B cell (primary cell): ENCODE measurements at regions of chr6 and their contacts with region 1.

Region 1: GRCh38 chr6:154675602-154676088 is 57.6 kb upstream of the SCAF8 start:
- DNase-seq: peak; percentile 95
- ATAC-seq: peak; percentile 100
- H3K4me3 ChIP-seq: no peak overlapping the region
- H3K4me3 Mint-ChIP-seq: no peak overlapping the region
- H3K27ac ChIP-seq: no peak overlapping the region
- H3K27ac Mint-ChIP-seq: no peak overlapping the region
- H3K4me1 ChIP-seq: no peaks in the 10 kb centered on the region
- H3K4me1 Mint-ChIP-seq: no peaks in the 10 kb centered on the region
- H3K27me3 ChIP-seq: no peaks in the 10 kb centered on the region
- H3K27me3 Mint-ChIP-seq: no peaks in the 10 kb centered on the region
- CTCF ChIP-seq: peak; percentile 100

Region 2: DNA sequence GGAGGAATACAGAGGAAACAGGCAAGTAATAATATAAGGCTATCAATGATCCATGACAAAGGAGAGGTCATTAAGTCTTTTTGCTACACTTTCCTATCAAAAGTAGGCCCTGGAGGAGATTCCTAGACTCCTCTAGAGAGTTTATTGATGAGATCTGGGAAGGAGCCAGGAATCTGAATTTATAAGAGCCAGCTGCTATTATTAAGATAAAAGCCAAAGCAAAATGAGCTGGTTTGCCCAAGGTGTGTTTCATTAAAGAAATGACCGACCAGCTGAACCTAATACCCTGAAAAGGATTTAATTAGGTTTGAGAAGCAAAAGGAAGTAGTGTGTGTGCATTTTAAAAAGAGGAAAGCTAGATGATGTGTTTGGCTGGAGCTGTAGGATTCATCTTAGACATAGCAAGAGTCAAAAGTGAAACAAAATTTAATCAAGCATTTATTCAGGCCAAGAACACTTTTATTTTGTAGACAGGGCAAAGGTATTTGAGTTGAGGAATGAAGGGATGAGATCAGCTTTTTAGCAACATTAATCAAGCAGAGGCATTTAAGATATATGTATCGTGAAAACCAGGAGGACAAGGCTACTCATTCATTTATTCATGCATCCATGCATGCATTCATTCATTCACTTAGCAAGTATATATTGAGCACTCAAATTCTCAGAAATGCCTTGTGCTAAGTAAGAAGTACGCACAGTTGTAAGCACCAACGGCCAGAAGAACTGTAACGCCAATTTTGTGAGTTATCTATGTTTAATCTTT is 14.0 kb after region 1 on chr6:
- CTCF ChIA-PET with region 1: interaction called, 35 read pairs
- POLR2A ChIA-PET with region 1: no interaction called
- intact Hi-C with region 1: no loop called
- DNase-seq: no peak
- ATAC-seq: no peak
- H3K4me3 ChIP-seq: no peak overlapping the region
- H3K4me3 Mint-ChIP-seq: no peak overlapping the region
- H3K27ac ChIP-seq: no peak overlapping the region
- H3K27ac Mint-ChIP-seq: no peak overlapping the region
- H3K4me1 ChIP-seq: peaks cover 6 to 12% of the 10 kb centered on the region in 2 donors
- H3K4me1 Mint-ChIP-seq: peaks cover 19% of the 10 kb centered on the region
- H3K27me3 ChIP-seq: no peaks in the 10 kb centered on the region
- H3K27me3 Mint-ChIP-seq: no peaks in the 10 kb centered on the region
- CTCF ChIP-seq: no peak

Region 3: GRCh38 chr6:154733012-154733625 is 57.5 kb after region 1 on chr6 and contains the start of gene SCAF8:
- CTCF ChIA-PET with region 1: interaction called, 9 read pairs
- POLR2A ChIA-PET with region 1: interaction called, 3 read pairs
- intact Hi-C with region 1: loop called (anchors 1 kb)
- DNase-seq: peak; percentile 94
- ATAC-seq: peak; percentile 74
- H3K4me3 ChIP-seq: peak within 1 kb of the TSS; percentile 78 to 97 (median 91)
- H3K4me3 Mint-ChIP-seq: peak within 1 kb of the TSS; percentile 92
- H3K27ac ChIP-seq: peak within 1 kb of the TSS; percentile 96 to 97
- H3K27ac Mint-ChIP-seq: peak within 1 kb of the TSS; percentile 99
- H3K4me1 ChIP-seq: peaks cover 31% of the 10 kb centered on the region in 2 donors
- H3K4me1 Mint-ChIP-seq: peaks cover 38% of the 10 kb centered on the region
- H3K27me3 ChIP-seq: no peaks in the 10 kb centered on the region
- H3K27me3 Mint-ChIP-seq: no peaks in the 10 kb centered on the region
- CTCF ChIP-seq: peak; percentile 83
- total RNA-seq, gene SCAF8: 75.2 and 77.9 TPM in 2 replicates

Region 4: DNA sequence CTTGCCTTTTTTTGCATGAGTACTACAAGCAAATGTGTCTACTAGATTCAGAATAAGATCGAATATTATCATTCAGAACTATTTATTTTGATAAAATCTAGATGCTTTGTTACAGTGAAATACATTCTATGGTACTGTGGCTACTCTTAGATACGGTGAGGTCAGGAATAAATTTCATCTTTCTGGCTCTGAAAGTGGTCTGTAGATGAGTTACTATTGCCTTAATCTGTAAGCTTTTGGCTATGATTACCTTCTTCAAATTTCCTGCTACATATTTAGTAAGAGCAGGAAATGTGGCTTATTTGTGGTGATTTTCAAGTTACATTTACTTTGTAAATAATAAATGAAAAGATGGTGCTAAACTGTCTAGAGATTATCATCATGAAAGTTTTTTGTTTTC is 107.6 kb after region 1 on chr6:
- CTCF ChIA-PET with region 1: interaction called, 11 read pairs
- POLR2A ChIA-PET with region 1: no interaction called
- intact Hi-C with region 1: no loop called
- DNase-seq: no peak
- ATAC-seq: no peak
- H3K4me3 ChIP-seq: no peak overlapping the region
- H3K4me3 Mint-ChIP-seq: no peak overlapping the region
- H3K27ac ChIP-seq: no peak overlapping the region
- H3K27ac Mint-ChIP-seq: no peak overlapping the region
- H3K4me1 ChIP-seq: no peaks in the 10 kb centered on the region
- H3K4me1 Mint-ChIP-seq: peaks cover 5% of the 10 kb centered on the region
- H3K27me3 ChIP-seq: no peaks in the 10 kb centered on the region
- H3K27me3 Mint-ChIP-seq: no peaks in the 10 kb centered on the region
- CTCF ChIP-seq: no peak

Region 5: GRCh38 chr6:154814063-154814462 is 138.4 kb after region 1 on chr6:
- CTCF ChIA-PET with region 1: interaction called, 267 read pairs
- POLR2A ChIA-PET with region 1: no interaction called
- intact Hi-C with region 1: no loop called
- DNase-seq: peak; percentile 38
- ATAC-seq: peak; percentile 50
- H3K4me3 ChIP-seq: no peak overlapping the region
- H3K4me3 Mint-ChIP-seq: peak overlapping the region; percentile 62
- H3K27ac ChIP-seq: peak overlapping the region; percentile 28 to 49
- H3K27ac Mint-ChIP-seq: peak overlapping the region; percentile 82
- H3K4me1 ChIP-seq: peaks cover 22 to 25% of the 10 kb centered on the region in 2 donors
- H3K4me1 Mint-ChIP-seq: peaks cover 39% of the 10 kb centered on the region
- H3K27me3 ChIP-seq: no peaks in the 10 kb centered on the region
- H3K27me3 Mint-ChIP-seq: no peaks in the 10 kb centered on the region
- CTCF ChIP-seq: no peak

Region 6: DNA sequence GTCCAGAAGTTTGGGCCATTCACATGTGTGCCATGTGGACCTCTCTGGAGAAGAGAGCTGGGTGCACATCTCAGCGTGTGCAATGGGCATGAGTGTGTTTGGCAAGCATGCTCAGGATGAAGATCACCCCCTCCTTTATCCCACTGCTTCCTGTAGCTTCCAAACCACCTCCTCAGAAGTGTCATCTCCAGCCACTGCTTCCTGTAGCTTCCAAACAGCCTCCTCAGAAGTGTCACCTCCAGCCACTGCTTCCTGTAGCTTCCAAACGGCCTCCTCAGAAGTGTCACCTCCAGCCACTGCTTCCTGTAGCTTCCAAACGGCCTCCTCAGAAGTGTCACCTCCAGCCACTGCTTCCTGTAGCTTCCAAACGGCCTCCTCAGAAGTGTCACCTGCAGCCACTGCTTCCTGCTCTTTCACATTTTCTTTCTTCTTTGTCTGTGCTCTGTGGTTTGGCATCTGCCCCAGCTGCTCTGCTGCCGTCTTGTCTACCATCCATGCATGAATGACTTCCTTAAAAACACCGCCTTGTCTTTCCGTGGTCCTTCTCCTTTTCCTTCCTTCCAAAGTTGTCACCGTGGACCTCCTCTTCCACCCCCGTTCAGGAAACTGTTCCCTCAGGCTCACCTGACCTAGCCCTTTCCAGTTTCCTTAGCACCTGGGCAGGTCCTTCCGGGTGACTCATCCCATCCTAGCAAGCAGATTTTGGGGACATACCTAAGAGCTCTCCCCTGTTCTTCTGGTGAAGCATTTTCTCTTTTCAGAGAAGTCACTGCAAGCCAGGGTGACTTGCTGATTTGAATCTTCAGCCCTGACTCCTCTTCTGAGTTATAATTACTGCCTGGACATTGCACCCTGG is 275.9 kb after region 1 on chr6:
- CTCF ChIA-PET with region 1: no interaction called
- POLR2A ChIA-PET with region 1: no interaction called
- intact Hi-C with region 1: loop called (anchors 2 kb)
- DNase-seq: peak; percentile 71
- ATAC-seq: peak; percentile 90
- H3K4me3 ChIP-seq: peak overlapping the region in 1 of 5 experiments; percentile 12
- H3K4me3 Mint-ChIP-seq: peak overlapping the region; percentile 78
- H3K27ac ChIP-seq: peak overlapping the region; percentile 37 to 75
- H3K27ac Mint-ChIP-seq: peak overlapping the region; percentile 95
- H3K4me1 ChIP-seq: peaks cover 21 to 26% of the 10 kb centered on the region in 2 donors
- H3K4me1 Mint-ChIP-seq: peaks cover 36% of the 10 kb centered on the region
- H3K27me3 ChIP-seq: no peaks in the 10 kb centered on the region
- H3K27me3 Mint-ChIP-seq: no peaks in the 10 kb centered on the region
- CTCF ChIP-seq: no peak

Region 7: DNA sequence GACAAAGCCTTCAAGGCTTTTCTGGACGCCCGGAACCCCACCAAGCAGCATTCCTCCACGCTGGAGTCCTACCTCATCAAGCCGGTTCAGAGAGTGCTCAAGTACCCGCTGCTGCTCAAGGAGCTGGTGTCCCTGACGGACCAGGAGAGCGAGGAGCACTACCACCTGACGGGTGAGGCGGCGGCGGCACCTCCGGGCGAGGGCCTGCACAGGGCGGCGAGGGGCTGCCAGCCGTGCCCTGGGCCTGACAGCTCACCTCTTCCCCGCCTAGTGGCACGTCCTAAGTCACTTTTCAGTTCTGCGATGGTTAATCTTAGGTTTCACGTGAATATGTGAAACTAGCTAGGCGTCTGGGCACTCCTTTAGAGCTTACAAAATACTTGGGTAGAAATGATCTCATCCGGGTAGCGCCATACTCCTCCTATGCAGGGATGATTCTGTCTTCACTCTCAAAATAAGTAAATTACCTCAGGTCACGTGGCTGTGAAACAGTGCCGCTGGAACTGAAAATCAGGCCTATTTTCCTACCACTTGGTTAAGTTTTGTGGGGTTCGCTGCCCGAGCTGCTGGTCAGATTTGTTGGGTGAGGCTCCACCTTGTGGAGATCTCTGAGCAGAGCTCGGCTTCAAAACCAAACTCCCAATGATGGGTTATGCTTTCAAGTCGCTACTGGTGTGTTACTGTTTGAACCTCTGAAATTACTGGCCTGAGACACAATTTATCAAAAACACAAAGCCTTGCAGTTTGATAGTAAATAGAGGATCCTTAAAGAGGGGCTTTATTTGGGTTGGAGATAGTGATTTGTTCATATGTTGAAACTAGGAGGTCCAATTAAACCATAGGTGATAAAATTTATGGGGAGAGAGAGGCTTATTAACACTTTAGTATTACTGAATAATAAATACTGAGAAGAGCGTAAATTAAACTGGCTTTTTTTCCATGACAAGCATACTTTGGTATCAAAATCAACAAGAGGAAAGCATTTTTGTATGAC is 572.7 kb after region 1 on chr6:
- CTCF ChIA-PET with region 1: interaction called, 11 read pairs
- POLR2A ChIA-PET with region 1: no interaction called
- intact Hi-C with region 1: loop called (anchors 1 kb)
- DNase-seq: peak; percentile 56
- ATAC-seq: peak; percentile 56
- H3K4me3 ChIP-seq: no peak overlapping the region
- H3K4me3 Mint-ChIP-seq: no peak overlapping the region
- H3K27ac ChIP-seq: no peak overlapping the region
- H3K27ac Mint-ChIP-seq: no peak overlapping the region
- H3K4me1 ChIP-seq: no peaks in the 10 kb centered on the region
- H3K4me1 Mint-ChIP-seq: peaks cover 2% of the 10 kb centered on the region
- H3K27me3 ChIP-seq: no peaks in the 10 kb centered on the region
- H3K27me3 Mint-ChIP-seq: no peaks in the 10 kb centered on the region
- CTCF ChIP-seq: peak; percentile 56